ENCODE measurements at regions of chr15 and their contacts with region 1.

Region 1: DNA sequence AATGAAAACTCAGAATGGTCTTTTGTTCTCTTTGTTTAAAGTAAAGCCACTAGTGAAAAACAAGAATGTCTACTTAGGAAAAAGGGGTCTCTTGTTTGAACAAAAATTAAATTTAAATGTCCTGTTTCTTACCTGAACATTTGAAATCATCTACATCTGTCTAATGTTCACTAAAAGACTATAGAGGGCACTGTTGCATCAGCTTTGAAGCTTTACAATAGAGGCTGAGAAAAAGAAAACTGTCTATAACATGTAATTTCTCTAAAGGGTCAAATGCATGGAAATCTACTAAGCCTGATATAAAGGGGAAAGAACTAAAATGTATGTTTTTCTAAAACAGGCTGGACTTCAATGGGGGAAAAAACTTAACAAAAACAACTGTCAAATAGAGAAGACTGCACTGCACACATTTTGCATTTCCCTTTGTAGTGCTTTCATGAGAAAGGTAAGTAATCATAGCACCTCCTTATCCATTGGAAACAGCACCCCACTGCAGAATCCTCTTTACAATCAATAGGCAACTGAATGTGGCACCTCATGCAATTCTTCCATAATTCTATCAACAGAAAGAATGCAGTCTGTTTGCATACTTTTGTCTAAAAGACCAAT is 26.3 kb downstream of the DPH6 start:
- DNase-seq: peak; percentile 69
- H3K4me3 ChIP-seq: no peak overlapping the region
- H3K27ac ChIP-seq: no peak overlapping the region
- H3K4me1 ChIP-seq: peaks cover 17% of the 10 kb centered on the region
- H3K27me3 ChIP-seq: no peaks in the 10 kb centered on the region
- CTCF ChIP-seq: peak; percentile 79

Region 2: GRCh38 chr15:35078221-35078915 is 441.3 kb before region 1 on chr15:
- CTCF ChIA-PET with region 1: interaction called, 3 read pairs
- POLR2A ChIA-PET with region 1: no interaction called
- intact Hi-C with region 1: loop called (anchors 5 kb)
- DNase-seq: peak; percentile 69
- H3K4me3 ChIP-seq: no peak overlapping the region
- H3K27ac ChIP-seq: no peak overlapping the region
- H3K4me1 ChIP-seq: no peaks in the 10 kb centered on the region
- H3K27me3 ChIP-seq: no peaks in the 10 kb centered on the region
- CTCF ChIP-seq: peak; percentile 85

Region 3: DNA sequence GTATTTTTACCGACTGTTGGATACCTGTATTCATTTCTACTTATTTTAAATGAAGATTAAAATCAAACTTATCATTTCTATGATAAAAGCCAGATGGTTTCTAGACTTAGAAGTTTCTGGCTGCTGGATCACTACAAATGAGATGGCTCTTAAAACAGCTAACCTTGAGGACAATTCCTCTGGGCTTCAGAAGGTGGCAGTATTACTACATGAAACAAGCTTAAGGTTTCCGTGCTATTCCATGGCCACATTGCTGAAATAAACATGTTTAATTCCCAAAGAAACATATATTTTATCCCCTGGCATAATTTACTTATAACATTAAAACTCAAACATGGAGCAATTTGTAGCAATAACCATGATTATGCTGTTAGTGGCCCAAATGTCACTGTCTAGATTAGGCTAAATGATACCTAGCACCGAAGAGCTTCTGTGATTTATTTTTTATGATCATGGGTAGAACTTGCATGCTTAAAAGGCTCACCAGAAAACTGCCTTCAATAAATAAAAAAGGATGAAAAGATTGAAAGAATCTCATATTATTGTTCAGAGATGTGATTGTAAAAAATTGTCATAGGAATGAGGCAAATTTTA is 230.5 kb before region 1 on chr15:
- CTCF ChIA-PET with region 1: no interaction called
- POLR2A ChIA-PET with region 1: no interaction called
- intact Hi-C with region 1: loop called (anchors 5 kb)
- DNase-seq: peak; percentile 69
- H3K4me3 ChIP-seq: no peak overlapping the region
- H3K27ac ChIP-seq: no peak overlapping the region
- H3K4me1 ChIP-seq: peaks cover 9% of the 10 kb centered on the region
- H3K27me3 ChIP-seq: no peaks in the 10 kb centered on the region
- CTCF ChIP-seq: peak; percentile 84

Region 4: DNA sequence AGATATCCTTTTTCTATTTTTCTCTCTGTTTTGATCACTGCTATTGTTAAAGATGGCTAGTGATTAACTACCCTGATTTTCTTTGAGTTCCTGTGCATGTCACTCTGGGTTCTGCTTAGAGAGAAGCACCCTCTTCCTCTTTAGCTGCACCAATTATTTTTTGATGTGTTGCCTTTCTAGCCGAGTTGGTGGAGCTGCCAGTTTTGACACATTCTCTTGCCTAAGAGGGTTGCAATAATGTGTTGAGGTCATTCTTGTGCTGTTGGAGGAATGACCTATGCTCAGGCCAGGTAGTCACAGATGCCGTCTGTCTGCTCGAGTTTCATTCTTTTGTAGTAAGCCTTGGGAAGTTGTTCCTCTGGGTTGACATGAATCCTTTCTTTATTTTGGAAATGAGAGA is 110.9 kb after region 1 on chr15:
- CTCF ChIA-PET with region 1: no interaction called
- POLR2A ChIA-PET with region 1: no interaction called
- intact Hi-C with region 1: no loop called
- DNase-seq: no peak
- H3K4me3 ChIP-seq: no peak overlapping the region
- H3K27ac ChIP-seq: no peak overlapping the region
- H3K4me1 ChIP-seq: no peaks in the 10 kb centered on the region
- H3K27me3 ChIP-seq: no peaks in the 10 kb centered on the region
- CTCF ChIP-seq: no peak

Region 5: GRCh38 chr15:35751413-35752133 is 231.9 kb after region 1 on chr15:
- CTCF ChIA-PET with region 1: no interaction called
- POLR2A ChIA-PET with region 1: no interaction called
- intact Hi-C with region 1: loop called (anchors 5 kb)
- DNase-seq: peak; percentile 86
- H3K4me3 ChIP-seq: peak overlapping the region; percentile 6
- H3K27ac ChIP-seq: no peak overlapping the region
- H3K4me1 ChIP-seq: peaks cover 5% of the 10 kb centered on the region
- H3K27me3 ChIP-seq: no peaks in the 10 kb centered on the region
- CTCF ChIP-seq: peak; percentile 86

Region 6: DNA sequence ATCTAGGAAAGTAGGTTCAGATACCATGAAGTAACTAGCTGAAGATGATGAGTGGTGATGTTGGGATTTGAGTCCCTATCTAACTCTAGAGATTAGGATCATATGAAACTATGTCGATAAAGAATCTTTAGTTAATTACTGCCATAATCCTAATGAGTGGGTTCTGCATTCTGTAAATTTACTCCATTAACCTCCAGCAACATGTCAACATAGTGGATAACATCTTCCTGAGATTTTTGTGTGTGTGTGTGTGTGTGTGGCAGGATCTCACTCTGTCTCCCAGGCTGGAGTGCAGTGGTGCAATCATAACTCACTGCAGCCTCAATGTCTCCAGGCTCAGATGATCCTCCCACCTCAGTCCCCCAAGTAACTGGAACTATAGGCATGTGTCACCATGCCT is 299.2 kb after region 1 on chr15:
- CTCF ChIA-PET with region 1: no interaction called
- POLR2A ChIA-PET with region 1: no interaction called
- intact Hi-C with region 1: no loop called
- DNase-seq: no peak
- H3K4me3 ChIP-seq: no peak overlapping the region
- H3K27ac ChIP-seq: no peak overlapping the region
- H3K4me1 ChIP-seq: no peaks in the 10 kb centered on the region
- H3K27me3 ChIP-seq: no peaks in the 10 kb centered on the region
- CTCF ChIP-seq: no peak

Region 7: DNA sequence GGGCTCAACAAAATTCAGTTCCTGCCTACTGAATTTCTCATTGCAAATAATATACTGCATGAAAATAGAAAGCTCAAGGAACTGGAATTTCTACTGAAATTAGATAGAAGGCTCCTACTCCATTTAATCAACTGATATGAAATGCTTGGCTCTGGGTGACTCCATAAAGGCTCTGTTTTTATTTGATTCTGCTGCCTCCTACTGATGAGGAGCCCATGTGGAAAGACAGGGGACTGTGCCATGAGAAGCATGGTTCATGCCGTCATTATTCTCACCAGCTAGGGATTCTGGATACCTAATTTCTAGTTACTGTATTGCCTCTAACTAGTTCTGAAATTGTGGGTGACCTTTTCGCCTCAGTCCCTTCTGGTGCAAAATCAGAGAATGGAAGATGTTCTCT is 392.6 kb after region 1 on chr15:
- CTCF ChIA-PET with region 1: no interaction called
- POLR2A ChIA-PET with region 1: no interaction called
- intact Hi-C with region 1: loop called (anchors 10 kb)
- DNase-seq: peak; percentile 58
- H3K4me3 ChIP-seq: no peak overlapping the region
- H3K27ac ChIP-seq: no peak overlapping the region
- H3K4me1 ChIP-seq: no peaks in the 10 kb centered on the region
- H3K27me3 ChIP-seq: no peaks in the 10 kb centered on the region
- CTCF ChIP-seq: peak; percentile 60

Region 8: DNA sequence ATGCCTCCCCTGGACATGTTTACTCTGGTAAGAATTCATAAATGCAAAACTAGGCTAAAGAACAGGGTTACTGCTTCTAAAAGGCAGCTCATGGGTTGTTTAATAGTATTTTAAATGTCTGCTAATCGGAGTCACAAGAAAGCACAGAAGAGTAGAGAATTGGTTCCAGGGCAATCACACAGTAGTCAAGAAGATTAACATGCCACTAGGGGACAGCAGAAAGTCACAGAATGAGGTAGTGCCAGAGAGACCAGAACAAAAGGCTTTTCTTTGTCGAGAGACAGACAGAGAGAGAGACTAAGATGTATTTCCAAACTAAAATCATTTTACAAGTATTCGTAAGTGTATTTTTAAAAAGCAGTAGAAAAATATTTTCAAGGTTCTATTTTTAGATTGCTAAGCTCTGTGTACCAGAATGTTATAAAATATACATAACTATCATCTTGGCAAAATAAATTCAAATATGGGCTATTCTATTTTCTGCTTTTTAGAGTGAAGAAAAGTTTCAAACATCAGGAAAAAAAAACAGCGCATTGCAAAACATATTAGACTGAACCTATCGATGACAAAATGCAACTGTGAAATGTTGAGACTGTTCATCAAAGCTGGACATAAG is 981.5 kb after region 1 on chr15:
- CTCF ChIA-PET with region 1: interaction called, 10 read pairs
- POLR2A ChIA-PET with region 1: no interaction called
- intact Hi-C with region 1: loop called (anchors 5 kb)
- DNase-seq: peak; percentile 78
- H3K4me3 ChIP-seq: no peak overlapping the region
- H3K27ac ChIP-seq: no peak overlapping the region
- H3K4me1 ChIP-seq: peaks cover 4% of the 10 kb centered on the region
- H3K27me3 ChIP-seq: no peaks in the 10 kb centered on the region
- CTCF ChIP-seq: peak; percentile 75

Region 9: DNA sequence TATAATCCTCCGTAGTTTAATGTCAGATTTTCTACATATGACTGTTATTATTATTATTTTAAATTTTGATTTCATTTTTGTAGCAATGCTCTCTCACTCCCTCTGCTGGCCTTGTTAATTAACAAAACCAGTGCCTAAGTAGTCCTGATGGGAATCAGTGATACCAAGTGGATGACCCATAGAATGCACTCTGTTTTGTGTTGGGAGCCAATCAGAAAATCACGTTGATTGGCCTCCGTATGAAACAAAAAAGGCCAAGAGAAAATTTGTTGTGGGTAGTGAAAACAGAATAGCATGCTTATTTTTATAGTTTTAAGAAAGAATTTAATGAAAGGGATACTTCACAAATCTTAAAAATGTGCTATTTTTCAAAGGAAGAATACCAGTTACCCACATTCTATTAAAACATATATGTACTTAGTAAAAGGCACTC is 1615.1 kb after region 1 on chr15:
- CTCF ChIA-PET with region 1: no interaction called
- POLR2A ChIA-PET with region 1: no interaction called
- intact Hi-C with region 1: loop called (anchors 2 kb)
- DNase-seq: peak; percentile 43
- H3K4me3 ChIP-seq: no peak overlapping the region
- H3K27ac ChIP-seq: no peak overlapping the region
- H3K4me1 ChIP-seq: no peaks in the 10 kb centered on the region
- H3K27me3 ChIP-seq: no peaks in the 10 kb centered on the region
- CTCF ChIP-seq: peak; percentile 70